ENCODE measurements at regions of chr11 and their contacts with region 1.

Region 1: DNA sequence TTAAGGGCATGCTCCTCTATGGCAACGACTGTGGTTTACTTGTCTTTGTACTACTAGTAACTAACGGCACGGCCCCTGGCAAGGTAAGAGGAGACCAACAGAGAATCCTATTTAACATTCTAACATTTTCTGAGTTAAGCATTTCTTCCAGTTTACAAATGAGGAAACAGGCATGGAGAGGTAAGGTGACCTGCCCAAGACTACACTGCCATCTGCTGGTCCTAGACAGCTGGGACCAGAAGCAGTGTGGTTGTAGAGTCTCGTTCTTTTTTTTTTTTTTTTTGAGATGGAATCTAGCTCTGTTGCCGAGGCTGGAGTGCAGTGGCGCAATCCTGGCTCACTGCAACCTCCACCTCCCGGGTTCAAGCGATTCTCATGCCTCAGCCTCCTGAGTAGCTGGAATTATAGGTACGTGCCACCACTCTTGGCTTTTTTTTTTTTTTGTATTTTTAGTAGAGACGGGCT is 5.3 kb upstream of the RAPSN start:
- DNase-seq: peak; percentile 63 to 72 (median 68)
- H3K4me3 ChIP-seq: no peak overlapping the region
- H3K4me3 Mint-ChIP-seq: peak overlapping the region in 2 of 8 donors; percentile 39 to 44
- H3K27ac ChIP-seq: no peak overlapping the region
- H3K27ac Mint-ChIP-seq: peak overlapping the region in 3 of 7 donors; percentile 27 to 36 (median 28)
- H3K4me1 ChIP-seq: peaks cover 10% of the 10 kb centered on the region
- H3K4me1 Mint-ChIP-seq: peaks cover 0 to 9% (median 5%) of the 10 kb centered on the region in 4 donors
- H3K27me3 ChIP-seq: no peaks in the 10 kb centered on the region
- H3K27me3 Mint-ChIP-seq: no peaks in the 10 kb centered on the region

Region 2: DNA sequence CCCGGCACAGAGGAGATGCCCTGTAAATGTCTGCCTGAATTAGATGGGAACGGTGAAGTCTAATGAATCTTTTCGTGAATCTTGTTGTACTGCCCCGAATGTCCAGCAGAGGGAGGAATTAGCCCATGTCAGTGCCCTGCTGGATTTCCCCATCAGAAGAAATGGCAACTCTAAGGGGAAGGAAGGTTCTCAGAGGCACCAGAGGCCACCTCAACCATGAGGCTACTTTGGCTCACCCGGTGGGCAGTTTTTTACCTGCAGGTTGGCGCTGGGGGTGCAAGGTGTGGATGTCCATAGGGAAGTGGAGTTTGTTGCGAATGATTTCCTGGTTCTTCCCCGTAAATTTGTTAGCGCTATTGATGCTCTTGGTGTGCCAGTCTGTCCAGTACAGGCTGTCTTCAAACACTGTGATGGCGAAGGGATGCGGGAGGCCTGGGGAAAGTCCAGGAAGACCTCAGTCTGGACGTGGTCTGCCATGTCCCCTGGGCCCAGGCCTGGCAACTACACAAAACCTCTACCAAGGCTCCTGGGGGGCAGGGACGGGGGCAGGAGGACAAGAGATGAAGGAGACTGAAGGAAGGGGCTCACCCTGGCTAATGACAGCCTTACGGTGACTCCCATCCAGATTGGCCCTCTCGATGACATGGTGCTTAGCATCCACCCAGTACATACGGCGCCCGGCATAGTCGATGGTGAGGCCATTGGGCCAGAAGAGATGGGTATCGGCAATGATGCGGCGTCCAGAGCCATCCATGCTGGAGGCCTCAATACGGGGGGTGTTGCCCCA is 564.3 kb before region 1 on chr11:
- CTCF ChIA-PET with region 1: no interaction called
- POLR2A ChIA-PET with region 1: no interaction called
- intact Hi-C with region 1: loop called (anchors 1 kb)
- DNase-seq: peak; percentile 62 to 71 (median 70)
- H3K4me3 ChIP-seq: no peak overlapping the region
- H3K4me3 Mint-ChIP-seq: no peak overlapping the region
- H3K27ac ChIP-seq: no peak overlapping the region
- H3K27ac Mint-ChIP-seq: peak overlapping the region in 1 of 7 donors; percentile 46
- H3K4me1 ChIP-seq: no peaks in the 10 kb centered on the region
- H3K4me1 Mint-ChIP-seq: peaks cover 0 to 2% (median 0%) of the 10 kb centered on the region in 4 donors
- H3K27me3 ChIP-seq: no peaks in the 10 kb centered on the region
- H3K27me3 Mint-ChIP-seq: peaks cover 3 to 7% of the 10 kb centered on the region in 2 donors

Region 3: GRCh38 chr11:46916286-46917108 is 537.7 kb before region 1 on chr11:
- CTCF ChIA-PET with region 1: no interaction called
- POLR2A ChIA-PET with region 1: no interaction called
- intact Hi-C with region 1: no loop called
- DNase-seq: peak in 1 of 5 donors; percentile 10
- H3K4me3 ChIP-seq: peak overlapping the region; percentile 14 to 56
- H3K4me3 Mint-ChIP-seq: peak overlapping the region; percentile 73 to 91 (median 82)
- H3K27ac ChIP-seq: no peak overlapping the region
- H3K27ac Mint-ChIP-seq: peak overlapping the region in 3 of 7 donors; percentile 48 to 70 (median 60)
- H3K4me1 ChIP-seq: peaks cover 25% of the 10 kb centered on the region
- H3K4me1 Mint-ChIP-seq: peaks cover 16 to 37% (median 28%) of the 10 kb centered on the region in 4 donors
- H3K27me3 ChIP-seq: peaks cover 54% of the 10 kb centered on the region
- H3K27me3 Mint-ChIP-seq: peaks cover 58 to 66% of the 10 kb centered on the region in 2 donors

Region 4: GRCh38 chr11:47329987-47330931 is 124.0 kb before region 1 on chr11:
- CTCF ChIA-PET with region 1: no interaction called
- POLR2A ChIA-PET with region 1: no interaction called
- intact Hi-C with region 1: loop called (anchors 10 kb)
- DNase-seq: no peak
- H3K4me3 ChIP-seq: no peak overlapping the region
- H3K4me3 Mint-ChIP-seq: peak overlapping the region in 1 of 8 donors; percentile 31
- H3K27ac ChIP-seq: no peak overlapping the region
- H3K27ac Mint-ChIP-seq: peak overlapping the region in 1 of 7 donors; percentile 5
- H3K4me1 ChIP-seq: no peaks in the 10 kb centered on the region
- H3K4me1 Mint-ChIP-seq: no peaks in the 10 kb centered on the region
- H3K27me3 ChIP-seq: no peaks in the 10 kb centered on the region
- H3K27me3 Mint-ChIP-seq: no peaks in the 10 kb centered on the region

Region 5: GRCh38 chr11:47426061-47426956 is 27.9 kb before region 1 on chr11 and contains the start of gene PSMC3:
- CTCF ChIA-PET with region 1: no interaction called
- POLR2A ChIA-PET with region 1: no interaction called
- intact Hi-C with region 1: no loop called
- DNase-seq: peak; percentile 94 to 97 (median 96)
- H3K4me3 ChIP-seq: peak within 1 kb of the TSS; percentile 64 to 91
- H3K4me3 Mint-ChIP-seq: peak within 1 kb of the TSS; percentile 99 to 100 (median 100)
- H3K27ac ChIP-seq: peak within 1 kb of the TSS; percentile 85
- H3K27ac Mint-ChIP-seq: peak within 1 kb of the TSS; percentile 92 to 99 (median 99)
- H3K4me1 ChIP-seq: peaks cover 18% of the 10 kb centered on the region
- H3K4me1 Mint-ChIP-seq: peaks cover 12 to 32% (median 22%) of the 10 kb centered on the region in 4 donors
- H3K27me3 ChIP-seq: no peaks in the 10 kb centered on the region
- H3K27me3 Mint-ChIP-seq: no peaks in the 10 kb centered on the region
- total RNA-seq, gene PSMC3: 53.9 to 59.6 TPM